Astrocyte of the cerebellum (primary cell): ENCODE measurements at regions of chr15 and their contacts with region 1.

Region 1: GRCh38 chr15:38504680-38505467 is 50.9 kb downstream of the FAM98B start:
- DNase-seq: peak; percentile 13
- H3K4me3 ChIP-seq: no peak overlapping the region
- CTCF ChIP-seq: no peak

Region 2: DNA sequence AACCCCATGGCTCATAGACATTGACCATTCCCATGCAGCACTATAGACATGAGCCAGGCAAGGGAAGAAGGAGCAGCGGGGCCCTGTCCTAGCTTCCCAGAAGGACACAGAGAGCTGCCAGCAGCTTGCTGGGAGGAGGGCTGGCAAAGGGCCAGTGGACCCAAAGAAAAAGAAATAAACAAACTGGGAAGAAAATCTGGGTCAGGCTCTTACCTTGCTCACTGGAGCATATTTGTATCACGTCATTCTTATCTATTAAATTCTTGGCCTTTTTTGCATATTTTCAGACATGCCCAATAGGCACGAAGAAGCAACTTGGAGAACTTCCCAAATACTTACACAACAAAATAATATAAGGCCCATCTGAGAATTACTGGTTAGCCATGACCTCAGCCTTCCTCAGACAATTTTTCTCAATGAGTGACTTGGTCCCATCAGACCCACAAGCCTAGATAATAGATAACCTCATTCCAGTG is 31.4 kb after region 1 on chr15:
- in situ Hi-C with region 1: loop called (anchors 5 kb)
- DNase-seq: peak; percentile 38
- H3K4me3 ChIP-seq: no peak overlapping the region
- CTCF ChIP-seq: no peak